Right ventricle myocardium inferior (tissue), 1 donor: ENCODE measurements at regions of chr11 and their contacts with region 1.

Region 1: DNA sequence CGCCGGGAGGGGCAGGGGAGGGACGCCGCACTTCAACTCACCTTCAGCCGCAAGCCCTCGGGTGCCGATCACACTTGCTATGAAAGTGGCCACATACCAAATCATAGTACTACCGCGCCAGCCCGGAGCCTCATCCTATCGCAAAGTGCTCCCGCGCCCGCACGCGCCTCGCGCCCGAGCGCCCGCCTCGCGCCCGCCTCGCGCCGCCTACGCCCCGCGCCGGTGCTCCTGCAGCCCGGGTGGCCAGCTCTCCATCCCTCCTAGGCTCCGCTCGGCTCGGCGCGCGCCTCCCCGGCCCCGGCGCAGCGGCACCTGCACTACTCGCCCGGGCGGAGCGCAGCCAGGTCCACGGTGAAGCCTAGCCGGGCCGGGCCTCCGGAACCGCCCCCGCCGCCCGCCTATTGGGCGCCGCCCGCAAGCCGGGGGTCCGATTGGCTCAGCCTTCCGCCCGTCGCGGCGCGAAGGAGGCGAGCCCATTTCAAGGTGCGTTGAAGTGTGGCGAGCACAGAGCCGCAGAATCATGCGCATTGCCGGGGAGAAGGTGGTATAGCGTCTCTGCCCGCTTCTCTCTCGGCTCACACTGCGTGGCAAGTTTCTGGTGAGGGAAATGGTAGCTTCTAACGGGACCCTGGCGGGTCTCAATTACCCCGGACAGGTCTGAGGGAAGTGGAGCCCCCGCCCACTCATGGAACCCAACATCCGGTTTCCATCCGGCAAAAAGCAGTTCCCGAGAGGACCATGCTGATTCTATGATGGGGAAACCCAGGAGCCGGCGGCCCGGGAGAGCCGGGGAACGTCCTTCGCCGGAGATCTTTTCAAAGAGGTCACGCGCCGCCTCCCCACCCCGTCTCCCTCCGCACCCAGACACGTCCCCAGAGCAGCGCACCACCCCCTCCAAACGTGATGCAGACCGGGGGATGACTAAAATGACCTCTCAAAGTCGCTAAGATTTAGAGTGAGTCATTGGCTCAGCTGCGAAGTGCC is at the start of gene IGSF9B:
- DNase-seq: peak; percentile 89
- ATAC-seq: peak; percentile 86
- total RNA-seq, gene IGSF9B: 41.7 TPM

Region 2: GRCh38 chr11:133834682-133835592 is 122.0 kb before region 1 on chr11:
- intact Hi-C with region 1: no loop called
- DNase-seq: no peak
- ATAC-seq: peak; percentile 72

Region 3: DNA sequence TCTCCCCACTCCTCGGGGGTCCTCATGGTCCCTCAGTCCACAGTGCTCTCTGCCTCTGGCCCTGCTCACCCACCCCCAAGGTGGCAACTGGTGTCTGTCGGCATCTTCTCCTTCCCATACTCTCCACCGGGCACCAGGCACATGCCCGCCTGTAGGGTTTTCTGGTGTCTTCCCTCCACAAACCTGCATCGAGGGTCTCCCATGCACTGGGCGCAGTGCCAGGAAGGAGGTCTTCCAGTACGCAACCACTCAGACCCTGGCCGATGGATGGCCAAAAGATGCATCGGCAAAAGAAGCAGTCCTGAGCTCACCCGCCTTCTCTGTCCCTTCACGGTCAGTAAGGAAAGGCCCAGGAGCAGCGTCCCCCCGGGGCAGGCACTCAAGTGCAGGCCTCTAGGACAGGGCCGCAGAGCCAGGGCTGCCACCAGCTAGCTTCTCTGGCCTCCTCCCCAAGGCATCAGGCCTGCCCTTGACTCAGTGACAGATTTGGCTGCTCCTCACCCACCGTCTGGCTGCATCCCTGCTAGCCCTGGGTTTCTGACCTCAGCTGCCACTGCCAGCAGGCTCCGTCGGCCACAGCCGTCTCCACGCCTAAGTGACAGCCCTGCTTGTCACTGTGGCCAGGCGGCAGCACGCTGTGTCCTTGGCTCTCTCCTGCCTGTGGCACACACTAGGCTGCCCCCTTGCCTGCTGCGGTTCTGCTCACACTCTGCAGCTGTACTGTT is 31.9 kb after region 1 on chr11:
- intact Hi-C with region 1: loop called (anchors 2 kb)
- DNase-seq: peak; percentile 86
- ATAC-seq: peak; percentile 93

Region 4: GRCh38 chr11:134037046-134037908 is 80.3 kb after region 1 on chr11:
- intact Hi-C with region 1: loop called (anchors 2 kb)
- DNase-seq: peak; percentile 85
- ATAC-seq: peak; percentile 66

Region 5: GRCh38 chr11:134120143-134120850 is 163.4 kb after region 1 on chr11:
- intact Hi-C with region 1: loop called (anchors 5 kb)
- DNase-seq: no peak
- ATAC-seq: peak; percentile 75

Region 6: DNA sequence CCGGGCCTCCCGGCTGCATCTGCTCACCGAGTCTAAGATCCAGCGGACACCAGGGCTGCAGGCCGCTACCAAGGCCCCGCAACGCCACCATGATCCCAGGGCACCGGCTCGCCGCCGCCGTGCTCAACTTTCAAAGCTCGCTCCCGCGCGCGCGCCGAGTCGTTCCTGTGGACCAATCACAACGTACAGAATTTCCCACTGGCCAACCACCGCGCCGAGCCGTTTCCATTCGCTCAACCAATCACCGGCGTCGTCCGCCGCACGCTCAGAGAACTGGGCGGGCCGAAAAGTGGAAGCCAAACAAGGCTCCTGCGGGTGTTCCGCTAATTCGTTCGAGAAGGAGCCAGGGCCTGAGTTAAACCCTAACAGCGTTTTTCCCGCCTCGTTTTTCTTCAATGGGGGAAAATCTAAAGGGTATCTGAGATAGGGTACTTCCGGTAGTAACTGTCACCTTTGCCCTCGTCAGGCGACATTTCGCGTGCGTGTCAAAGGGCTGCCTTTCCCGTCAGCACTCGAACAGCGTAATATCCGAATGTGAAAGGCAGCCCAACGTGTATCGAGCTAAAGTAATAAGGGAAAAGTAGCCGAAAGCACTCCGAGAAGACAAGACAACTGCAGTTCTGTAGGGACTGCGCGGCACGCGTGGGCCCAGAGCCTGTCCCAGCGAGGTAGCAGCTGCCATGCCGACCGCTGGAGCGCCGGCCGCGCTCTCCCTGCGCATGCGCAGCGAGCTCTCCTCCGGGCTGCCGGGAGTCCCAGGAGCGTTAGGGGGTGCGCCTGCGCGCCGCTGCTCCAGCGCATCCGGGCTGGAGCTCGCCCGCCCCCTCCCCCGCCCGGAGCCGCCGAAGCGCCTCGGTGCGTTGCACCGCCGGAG is 267.1 kb after region 1 on chr11 and contains the starts of genes NCAPD3 and VPS26B:
- intact Hi-C with region 1: loop called (anchors 10 kb)
- DNase-seq: peak; percentile 99
- ATAC-seq: peak; percentile 95
- total RNA-seq, gene NCAPD3: 12.3 TPM
- total RNA-seq, gene VPS26B: 39.5 TPM